PC-9 (cell line): ENCODE measurements at regions of chr1 and their contacts with region 1.

Region 1: GRCh38 chr1:216183007-216183406 is 240.2 kb downstream of the USH2A start:
- DNase-seq: no peak
- H3K4me3 ChIP-seq: no peak overlapping the region
- H3K27ac ChIP-seq: no peak overlapping the region
- H3K4me1 ChIP-seq: no peaks in the 10 kb centered on the region
- H3K27me3 ChIP-seq: no peaks in the 10 kb centered on the region
- CTCF ChIP-seq: no peak

Region 2: DNA sequence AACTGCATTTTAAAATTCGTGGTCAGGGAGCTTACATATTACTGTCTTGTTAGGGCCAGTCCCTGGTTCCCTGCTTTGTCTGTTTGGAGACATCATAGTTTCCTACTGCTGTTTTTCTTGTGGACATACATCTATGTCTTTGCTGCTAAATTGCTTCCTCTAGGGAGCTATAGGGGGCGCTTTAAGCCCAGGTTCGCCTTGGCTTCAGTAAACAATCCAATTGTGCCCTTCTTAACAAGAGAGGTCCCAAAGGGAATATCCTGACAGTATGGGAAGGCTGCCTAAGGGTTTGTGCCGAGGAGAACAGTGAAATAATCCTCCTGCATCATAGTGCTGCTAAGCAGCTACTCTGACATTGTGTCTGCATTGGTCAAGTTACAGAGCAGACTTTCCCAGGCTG is 127.8 kb after region 1 on chr1:
- CTCF ChIA-PET with region 1: interaction called, 23 read pairs
- POLR2A ChIA-PET with region 1: no interaction called
- intact Hi-C with region 1: no loop called
- DNase-seq: no peak
- H3K4me3 ChIP-seq: no peak overlapping the region
- H3K27ac ChIP-seq: no peak overlapping the region
- H3K4me1 ChIP-seq: peaks cover 9% of the 10 kb centered on the region
- H3K27me3 ChIP-seq: no peaks in the 10 kb centered on the region
- CTCF ChIP-seq: peak; percentile 57